CD8-positive, alpha-beta T cell (primary cell): ENCODE measurements at regions of chr1 and their contacts with region 1.

Region 1: GRCh38 chr1:210448297-210448892 is 119.7 kb downstream of the HHAT start:
- DNase-seq: peak in 2 of 9 experiments; percentile 43 to 52
- ATAC-seq: no peak
- H3K4me3 ChIP-seq: no peak overlapping the region
- H3K4me3 Mint-ChIP-seq: no peak overlapping the region
- H3K27ac ChIP-seq: no peak overlapping the region
- H3K27ac Mint-ChIP-seq: no peak overlapping the region
- H3K4me1 ChIP-seq: peaks cover 9% of the 10 kb centered on the region
- H3K4me1 Mint-ChIP-seq: peaks cover 15% of the 10 kb centered on the region
- H3K27me3 ChIP-seq: no peaks in the 10 kb centered on the region
- H3K27me3 Mint-ChIP-seq: no peaks in the 10 kb centered on the region
- CTCF ChIP-seq: peak; percentile 59

Region 2: DNA sequence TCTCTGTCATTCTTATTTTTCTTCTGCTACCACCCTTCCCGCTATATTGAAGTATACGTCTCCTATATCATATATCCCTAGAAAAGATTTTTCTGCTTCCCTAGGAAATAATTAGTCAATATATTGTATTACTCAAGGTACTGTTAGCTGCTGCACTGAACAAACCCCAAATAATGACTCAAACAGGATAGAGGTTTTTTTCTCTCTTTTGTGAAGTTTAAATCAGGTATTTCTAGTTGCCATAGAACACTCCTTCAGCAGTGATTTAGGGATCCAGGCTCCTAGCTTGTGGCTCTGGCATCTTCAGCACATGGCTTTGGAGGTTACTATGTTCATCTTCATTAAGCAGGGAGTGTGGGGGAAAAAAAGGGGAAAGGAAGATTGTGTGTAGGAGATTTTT is 492.3 kb before region 1 on chr1:
- CTCF ChIA-PET with region 1: no interaction called
- POLR2A ChIA-PET with region 1: no interaction called
- intact Hi-C with region 1: no loop called
- DNase-seq: no peak
- ATAC-seq: no peak
- H3K4me3 ChIP-seq: no peak overlapping the region
- H3K4me3 Mint-ChIP-seq: no peak overlapping the region
- H3K27ac ChIP-seq: no peak overlapping the region
- H3K27ac Mint-ChIP-seq: no peak overlapping the region
- H3K4me1 ChIP-seq: no peaks in the 10 kb centered on the region
- H3K4me1 Mint-ChIP-seq: no peaks in the 10 kb centered on the region
- H3K27me3 ChIP-seq: no peaks in the 10 kb centered on the region
- H3K27me3 Mint-ChIP-seq: peaks cover 7% of the 10 kb centered on the region
- CTCF ChIP-seq: no peak

Region 3: DNA sequence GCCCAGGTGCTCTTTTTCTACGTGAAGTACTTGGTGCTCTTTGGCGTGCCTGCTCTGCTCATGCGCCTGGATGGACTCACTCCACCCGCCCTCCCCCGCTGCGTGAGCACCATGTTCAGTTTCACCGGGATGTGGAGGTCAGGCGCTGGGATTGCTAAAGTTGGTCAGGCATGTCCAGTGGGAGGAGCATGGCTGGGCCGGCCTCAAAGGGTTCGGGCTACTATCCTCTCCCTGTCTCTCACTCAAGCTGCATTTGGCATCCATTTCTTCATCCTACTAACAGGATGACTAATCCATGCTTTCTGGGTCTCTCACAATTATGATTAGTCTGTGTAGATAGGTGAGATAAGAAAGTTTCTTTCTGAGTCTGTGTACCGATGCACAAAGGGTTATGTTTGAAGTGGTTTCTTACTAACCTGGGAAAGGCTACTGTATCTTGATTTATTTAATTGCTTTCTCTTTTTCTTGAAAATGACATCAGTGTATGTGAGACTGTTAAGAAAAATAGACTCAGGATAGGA is 16.2 kb after region 1 on chr1:
- CTCF ChIA-PET with region 1: interaction called, 10 read pairs
- POLR2A ChIA-PET with region 1: no interaction called
- intact Hi-C with region 1: no loop called
- DNase-seq: no peak
- ATAC-seq: no peak
- H3K4me3 ChIP-seq: no peak overlapping the region
- H3K4me3 Mint-ChIP-seq: no peak overlapping the region
- H3K27ac ChIP-seq: no peak overlapping the region
- H3K27ac Mint-ChIP-seq: no peak overlapping the region
- H3K4me1 ChIP-seq: no peaks in the 10 kb centered on the region
- H3K4me1 Mint-ChIP-seq: no peaks in the 10 kb centered on the region
- H3K27me3 ChIP-seq: no peaks in the 10 kb centered on the region
- H3K27me3 Mint-ChIP-seq: no peaks in the 10 kb centered on the region
- CTCF ChIP-seq: no peak